ENCODE measurements at regions of chrX and their contacts with region 1.

Region 1: GRCh38 chrX:118847676-118848075 is 24.1 kb downstream of the ZCCHC12 start:
- DNase-seq: no peak
- H3K4me3 Mint-ChIP-seq: no peak overlapping the region
- H3K27ac Mint-ChIP-seq: no peak overlapping the region
- H3K4me1 Mint-ChIP-seq: no peaks in the 10 kb centered on the region
- H3K27me3 Mint-ChIP-seq: peaks cover 2% of the 10 kb centered on the region

Region 2: DNA sequence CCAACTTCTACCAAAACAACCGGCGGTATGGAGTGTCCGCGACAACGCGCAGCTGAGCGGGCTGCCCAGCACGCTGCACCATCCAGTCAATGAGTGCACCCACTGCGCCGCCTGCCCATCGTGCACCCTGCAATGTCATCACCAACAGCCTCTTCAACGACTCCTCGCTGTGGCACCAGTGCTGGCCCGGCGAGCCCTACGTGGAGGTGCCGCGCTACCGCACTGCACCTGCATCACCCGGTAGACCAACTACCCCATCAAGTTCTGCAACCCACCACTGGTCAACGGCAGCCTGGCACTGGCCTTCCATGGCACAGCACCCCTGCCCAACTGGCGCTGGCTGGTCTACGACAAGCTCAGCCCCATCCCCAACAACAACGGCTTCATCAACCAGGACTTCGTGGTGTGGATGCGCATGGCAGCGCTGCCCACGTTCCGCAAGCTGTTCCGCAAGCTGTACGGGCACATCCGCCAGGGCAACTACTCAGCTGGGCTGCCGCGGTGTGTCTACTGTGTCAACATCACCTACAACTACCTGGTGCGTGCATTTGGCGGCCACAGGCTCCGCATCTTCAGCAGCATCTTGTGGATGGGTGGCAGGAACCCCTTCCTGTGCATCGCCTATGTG is 77.4 kb before region 1 on chrX:
- CTCF ChIA-PET with region 1: no interaction called
- POLR2A ChIA-PET with region 1: no interaction called
- intact Hi-C with region 1: no loop called
- DNase-seq: no peak
- H3K4me3 Mint-ChIP-seq: no peak overlapping the region
- H3K27ac Mint-ChIP-seq: no peak overlapping the region
- H3K4me1 Mint-ChIP-seq: no peaks in the 10 kb centered on the region
- H3K27me3 Mint-ChIP-seq: peaks cover 2% of the 10 kb centered on the region

Region 3: GRCh38 chrX:119004920-119005524 is 157.3 kb after region 1 on chrX:
- CTCF ChIA-PET with region 1: interaction called, 34 read pairs
- POLR2A ChIA-PET with region 1: no interaction called
- intact Hi-C with region 1: loop called (anchors 1 kb)
- DNase-seq: peak; percentile 63
- H3K4me3 Mint-ChIP-seq: no peak overlapping the region
- H3K27ac Mint-ChIP-seq: no peak overlapping the region
- H3K4me1 Mint-ChIP-seq: peaks cover 5% of the 10 kb centered on the region
- H3K27me3 Mint-ChIP-seq: no peaks in the 10 kb centered on the region

Region 4: GRCh38 chrX:119266364-119266995 is 418.8 kb after region 1 on chrX:
- CTCF ChIA-PET with region 1: interaction called, 4 read pairs
- POLR2A ChIA-PET with region 1: no interaction called
- intact Hi-C with region 1: loop called (anchors 2 kb)
- DNase-seq: peak; percentile 32
- H3K4me3 Mint-ChIP-seq: no peak overlapping the region
- H3K27ac Mint-ChIP-seq: no peak overlapping the region
- H3K4me1 Mint-ChIP-seq: no peaks in the 10 kb centered on the region
- H3K27me3 Mint-ChIP-seq: no peaks in the 10 kb centered on the region